ENCODE measurements at regions of chr6 and their contacts with region 1.

Region 1: DNA sequence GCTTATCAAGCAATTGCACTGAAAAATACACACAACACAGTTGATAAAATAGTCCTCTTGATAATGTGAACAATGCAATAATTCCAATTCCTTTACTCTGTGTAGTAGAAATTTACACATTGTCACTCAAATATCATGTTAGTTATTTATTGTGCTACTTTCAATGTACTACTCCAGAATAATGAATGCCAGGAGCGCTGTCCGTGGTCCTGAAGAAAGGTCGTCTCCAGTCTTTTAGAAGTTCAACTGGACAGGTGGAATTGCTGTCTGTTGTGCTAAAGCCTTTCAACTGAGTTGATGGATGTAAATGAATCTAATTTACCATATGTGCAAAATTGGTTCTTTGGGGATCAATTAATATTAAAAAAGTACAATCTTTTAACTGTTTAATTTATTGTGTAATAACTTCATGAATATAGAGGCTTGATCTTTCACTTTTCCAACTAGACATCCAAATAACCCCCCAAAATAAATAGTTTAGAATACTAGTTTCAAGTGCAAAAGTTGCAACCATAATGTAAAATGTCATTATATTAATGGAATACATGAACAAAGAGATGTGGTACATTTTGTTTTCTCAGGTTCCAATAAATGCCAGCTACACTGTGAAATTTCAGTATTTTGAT is 3.2 kb downstream of the GRIK2 start:
- DNase-seq: peak in 4 of 9 donors; percentile 3 to 36 (median 10)
- ATAC-seq: no peak
- H3K4me3 ChIP-seq: no peak overlapping the region
- H3K4me3 Mint-ChIP-seq: no peak overlapping the region
- H3K27ac ChIP-seq: no peak overlapping the region
- H3K27ac Mint-ChIP-seq: no peak overlapping the region
- H3K4me1 ChIP-seq: no peaks in the 10 kb centered on the region
- H3K4me1 Mint-ChIP-seq: peaks cover 0 to 5% (median 0%) of the 10 kb centered on the region in 7 donors
- H3K27me3 ChIP-seq: peaks cover 3 to 4% of the 10 kb centered on the region in 2 donors
- H3K27me3 Mint-ChIP-seq: peaks cover 58 to 79% (median 68%) of the 10 kb centered on the region in 5 donors

Region 2: DNA sequence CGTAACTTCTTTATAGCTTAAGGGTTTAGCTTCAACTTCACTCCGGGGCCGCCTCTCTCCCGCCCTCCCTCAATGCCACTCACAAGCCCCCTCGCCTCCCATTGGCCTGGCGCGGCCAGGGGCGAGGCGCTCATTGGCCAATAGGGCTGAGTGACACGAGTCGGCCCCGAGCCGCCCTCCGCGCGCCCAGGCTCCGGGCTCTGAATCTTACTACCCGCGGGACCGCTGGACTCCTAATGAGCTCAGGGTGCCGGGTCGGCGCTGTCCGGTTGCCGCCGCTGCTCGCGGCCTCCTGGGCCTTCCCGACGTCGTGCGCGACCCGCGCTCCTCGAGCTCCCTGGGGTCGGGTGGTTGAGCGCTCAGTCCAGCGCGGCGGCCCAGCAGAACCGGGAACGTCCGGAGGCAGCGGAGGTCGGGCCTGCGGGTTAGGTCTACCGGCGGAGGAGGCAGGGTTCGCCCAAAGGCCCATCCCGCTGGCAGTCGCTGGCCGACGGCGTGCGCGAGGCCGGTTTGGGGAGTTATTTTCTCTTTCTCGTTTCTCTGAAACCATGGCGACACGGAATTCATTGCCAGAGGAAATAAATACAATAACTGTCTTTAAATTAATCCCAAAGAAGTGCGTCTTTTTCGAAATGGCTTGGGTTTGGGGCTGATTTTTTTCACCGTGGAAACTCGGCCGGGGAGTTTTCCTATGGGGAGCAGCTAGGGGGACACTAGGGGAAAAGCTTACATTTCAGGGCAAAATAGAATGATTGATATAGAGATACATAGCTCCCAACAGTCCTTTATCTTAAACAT is 931.6 kb before region 1 on chr6 and contains the start of gene SIM1:
- CTCF ChIA-PET with region 1: no interaction called
- POLR2A ChIA-PET with region 1: no interaction called
- intact Hi-C with region 1: loop called in 1 of 2 experiments (anchors 5 kb)
- DNase-seq: no peak
- ATAC-seq: peak; percentile 32
- H3K4me3 ChIP-seq: no peak within 1 kb of the TSS
- H3K4me3 Mint-ChIP-seq: peak within 1 kb of the TSS; percentile 13 to 66 (median 54)
- H3K27ac ChIP-seq: no peak within 1 kb of the TSS
- H3K27ac Mint-ChIP-seq: peak within 1 kb of the TSS in 1 of 9 donors; percentile 78
- H3K4me1 ChIP-seq: peaks cover 6 to 15% of the 10 kb centered on the region in 2 donors
- H3K4me1 Mint-ChIP-seq: peaks cover 7 to 47% (median 24%) of the 10 kb centered on the region in 7 donors
- H3K27me3 ChIP-seq: peaks cover 32 to 67% of the 10 kb centered on the region in 2 donors
- H3K27me3 Mint-ChIP-seq: peaks cover 84 to 93% (median 87%) of the 10 kb centered on the region in 5 donors
- total RNA-seq, gene SIM1: not detected

Region 3: DNA sequence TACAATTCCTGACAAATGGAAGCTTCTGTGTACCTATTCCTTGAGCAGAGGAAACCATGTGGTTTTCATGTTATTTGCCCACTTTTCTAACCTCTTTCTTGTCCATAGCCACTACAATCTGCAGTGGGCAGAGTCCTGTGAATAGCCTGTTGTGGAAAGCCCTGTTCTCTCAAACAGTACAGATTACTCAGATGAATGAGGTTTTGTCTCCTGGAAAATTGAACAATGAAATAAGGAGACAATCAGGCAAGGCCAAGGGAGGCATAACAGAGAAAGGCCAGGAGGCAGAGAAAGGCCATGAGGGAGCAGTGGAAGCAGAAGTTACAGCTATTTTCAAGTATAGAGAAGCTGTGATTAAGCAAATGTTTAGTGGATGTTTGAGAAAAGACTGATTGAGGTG is 186.1 kb after region 1 on chr6:
- CTCF ChIA-PET with region 1: no interaction called
- POLR2A ChIA-PET with region 1: no interaction called
- intact Hi-C with region 1: no loop called
- DNase-seq: no peak
- ATAC-seq: no peak
- H3K4me3 ChIP-seq: no peak overlapping the region
- H3K4me3 Mint-ChIP-seq: no peak overlapping the region
- H3K27ac ChIP-seq: no peak overlapping the region
- H3K27ac Mint-ChIP-seq: no peak overlapping the region
- H3K4me1 ChIP-seq: no peaks in the 10 kb centered on the region
- H3K4me1 Mint-ChIP-seq: no peaks in the 10 kb centered on the region
- H3K27me3 ChIP-seq: no peaks in the 10 kb centered on the region
- H3K27me3 Mint-ChIP-seq: no peaks in the 10 kb centered on the region

Measured in naive thymus-derived CD4-positive, alpha-beta T cell (primary cell).